ENCODE measurements at regions of chr6 and their contacts with region 1.

Region 1: GRCh38 chr6:53059648-53060589 is 5.3 kb upstream of the FBXO9 start:
- DNase-seq: no peak
- H3K4me3 ChIP-seq: peak overlapping the region; percentile 85
- H3K27ac ChIP-seq: no peak overlapping the region
- H3K4me1 ChIP-seq: peaks cover 4% of the 10 kb centered on the region
- H3K27me3 ChIP-seq: no peaks in the 10 kb centered on the region
- CTCF ChIP-seq: no peak

Region 2: DNA sequence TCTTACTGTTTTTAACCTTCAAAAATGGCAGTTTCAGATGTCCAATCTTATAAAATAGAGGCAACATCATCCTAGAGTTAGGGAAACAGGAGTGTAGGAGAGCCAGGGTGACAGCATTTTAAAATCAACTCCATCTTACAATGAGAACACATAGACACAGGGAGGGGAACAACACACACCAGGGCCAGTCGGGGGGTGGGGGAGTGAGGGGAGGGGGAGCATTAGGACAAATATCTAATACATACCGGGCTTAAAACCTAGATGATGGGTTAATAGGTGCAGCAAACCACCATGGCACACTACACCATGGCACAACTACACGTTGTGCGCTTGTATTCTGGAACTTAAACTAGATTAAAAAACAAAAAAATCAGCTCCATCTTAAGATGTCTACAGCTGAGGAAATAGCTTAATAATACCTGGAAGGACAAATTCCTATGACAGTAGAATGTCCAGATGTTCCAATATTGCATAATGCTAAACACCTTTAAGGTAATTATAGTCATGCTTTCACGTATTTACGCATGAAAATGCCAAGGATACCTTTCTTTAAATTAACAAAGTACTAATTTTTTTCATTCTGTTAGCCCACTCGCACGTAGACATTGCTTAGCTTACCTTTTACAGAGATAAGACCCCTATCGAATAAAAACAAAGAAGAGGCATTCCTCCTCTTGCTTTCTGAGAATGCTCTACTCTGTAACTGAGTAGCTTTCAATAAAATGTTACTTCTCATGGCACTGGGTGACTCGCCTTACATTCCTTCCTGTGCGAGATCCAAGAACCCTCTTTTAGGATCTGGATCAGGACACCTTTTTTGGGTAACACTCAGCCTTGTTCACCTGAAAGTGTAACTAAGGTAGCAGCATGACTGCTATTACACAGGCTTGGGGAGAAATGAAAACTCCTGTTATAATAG is 60.6 kb before region 1 on chr6:
- intact Hi-C with region 1: loop called (anchors 5 kb)
- DNase-seq: no peak
- H3K4me3 ChIP-seq: no peak overlapping the region
- H3K27ac ChIP-seq: no peak overlapping the region
- H3K4me1 ChIP-seq: no peaks in the 10 kb centered on the region
- H3K27me3 ChIP-seq: no peaks in the 10 kb centered on the region
- CTCF ChIP-seq: no peak

Region 3: DNA sequence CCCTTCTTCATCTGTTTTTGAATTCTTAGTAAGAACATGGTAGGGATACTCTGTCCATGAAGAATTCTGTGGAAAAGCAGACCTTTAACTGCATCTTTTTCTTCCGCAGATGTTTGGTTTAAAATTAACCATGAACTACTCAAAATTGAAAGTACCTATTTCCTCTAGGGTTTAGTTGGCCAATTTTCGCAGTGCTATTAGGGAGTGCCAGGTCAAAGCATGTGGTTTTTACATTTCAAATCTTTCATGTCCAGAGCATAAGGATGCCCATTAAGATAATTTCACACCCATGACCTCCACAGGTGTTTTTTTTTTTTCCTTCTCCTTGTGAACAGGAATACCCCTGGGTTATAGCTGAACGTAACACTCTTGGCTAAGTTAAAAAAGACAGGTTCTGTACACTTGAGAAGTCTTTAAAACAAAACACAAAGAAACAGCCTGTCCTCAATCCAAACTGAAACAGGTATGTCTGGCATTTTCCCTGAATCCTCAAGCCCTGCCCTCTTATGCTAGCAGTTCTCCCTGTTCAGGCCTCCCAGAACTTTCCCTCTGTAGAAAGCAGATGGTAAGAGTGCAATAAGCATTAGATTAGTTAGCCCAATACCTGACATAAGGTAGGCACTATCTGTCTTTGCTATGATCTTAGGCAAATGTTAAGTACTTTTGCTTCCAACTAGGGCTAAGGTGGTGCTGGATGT is 221.7 kb after region 1 on chr6:
- intact Hi-C with region 1: no loop called
- DNase-seq: no peak
- H3K4me3 ChIP-seq: no peak overlapping the region
- H3K27ac ChIP-seq: no peak overlapping the region
- H3K4me1 ChIP-seq: no peaks in the 10 kb centered on the region
- H3K27me3 ChIP-seq: no peaks in the 10 kb centered on the region
- CTCF ChIP-seq: no peak

Region 4: DNA sequence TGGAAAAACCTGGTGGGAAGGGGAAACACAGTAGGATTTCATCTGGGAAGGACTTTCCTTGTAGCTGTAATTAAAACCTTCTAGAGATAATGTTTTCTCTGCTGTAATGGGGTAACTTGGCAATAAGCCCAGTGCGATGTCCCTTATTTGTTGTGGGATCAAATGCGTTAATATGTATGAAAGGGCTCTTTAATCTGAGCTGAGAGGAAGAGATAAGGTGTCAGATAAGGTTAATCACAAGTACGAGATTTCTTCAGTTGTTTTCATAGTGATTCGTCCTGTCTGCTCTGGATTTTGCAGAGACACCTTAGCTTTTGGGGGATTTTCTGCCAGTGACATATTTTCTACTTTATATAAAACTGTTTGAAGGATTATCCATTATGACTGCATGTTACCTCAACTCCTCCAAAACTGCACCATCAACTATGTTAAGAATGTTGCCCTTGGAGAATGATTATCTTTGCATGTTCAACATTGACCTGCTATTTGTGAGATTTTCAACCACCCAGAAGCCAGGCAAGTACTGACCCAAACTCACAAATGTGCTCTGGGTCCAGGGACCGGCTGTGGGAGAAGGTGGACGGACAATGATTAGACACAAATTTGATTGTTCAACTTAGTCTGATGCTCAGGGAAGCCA is 310.1 kb after region 1 on chr6:
- intact Hi-C with region 1: no loop called
- DNase-seq: no peak
- H3K4me3 ChIP-seq: no peak overlapping the region
- H3K27ac ChIP-seq: no peak overlapping the region
- H3K4me1 ChIP-seq: no peaks in the 10 kb centered on the region
- H3K27me3 ChIP-seq: no peaks in the 10 kb centered on the region
- CTCF ChIP-seq: no peak